CD4-positive, alpha-beta T cell (primary cell): ENCODE measurements at regions of chr16 and their contacts with region 1.

Region 1: GRCh38 chr16:47141773-47142485 is 1.8 kb downstream of the NETO2 start:
- DNase-seq: peak; percentile 63 to 91 (median 77)
- ATAC-seq: peak; percentile 82
- H3K4me3 ChIP-seq: peak overlapping the region; percentile 56
- H3K4me3 Mint-ChIP-seq: peak overlapping the region; percentile 87
- H3K27ac ChIP-seq: no peak overlapping the region
- H3K27ac Mint-ChIP-seq: peak overlapping the region; percentile 45
- H3K4me1 ChIP-seq: peaks cover 17% of the 10 kb centered on the region
- H3K4me1 Mint-ChIP-seq: peaks cover 17% of the 10 kb centered on the region
- H3K27me3 ChIP-seq: peaks cover 0 to 8% of the 10 kb centered on the region in 2 experiments
- H3K27me3 Mint-ChIP-seq: peaks cover 21% of the 10 kb centered on the region
- CTCF ChIP-seq: peak; percentile 83

Region 2: GRCh38 chr16:46689365-46690280 is 452.3 kb before region 1 on chr16 and contains the start of gene ORC6:
- CTCF ChIA-PET with region 1: no interaction called
- POLR2A ChIA-PET with region 1: no interaction called
- intact Hi-C with region 1: loop called in 1 of 2 experiments (anchors 10 kb)
- DNase-seq: peak; percentile 92 to 97 (median 96)
- ATAC-seq: peak; percentile 72
- H3K4me3 ChIP-seq: peak within 1 kb of the TSS; percentile 94
- H3K4me3 Mint-ChIP-seq: no peak within 1 kb of the TSS
- H3K27ac ChIP-seq: peak within 1 kb of the TSS; percentile 91 to 98
- H3K27ac Mint-ChIP-seq: no peak within 1 kb of the TSS
- H3K4me1 ChIP-seq: peaks cover 23% of the 10 kb centered on the region
- H3K4me1 Mint-ChIP-seq: peaks cover 33% of the 10 kb centered on the region
- H3K27me3 ChIP-seq: no peaks in the 10 kb centered on the region
- H3K27me3 Mint-ChIP-seq: no peaks in the 10 kb centered on the region
- CTCF ChIP-seq: no peak
- total RNA-seq, gene ORC6: 3.7 to 3.8 TPM

Region 3: GRCh38 chr16:46947900-46948547 is 193.9 kb before region 1 on chr16:
- CTCF ChIA-PET with region 1: interaction called, 4 read pairs
- POLR2A ChIA-PET with region 1: no interaction called
- intact Hi-C with region 1: loop called in 1 of 2 experiments (anchors 10 kb)
- DNase-seq: peak in 8 of 14 experiments; percentile 4 to 70 (median 31)
- ATAC-seq: peak; percentile 76
- H3K4me3 ChIP-seq: no peak overlapping the region
- H3K4me3 Mint-ChIP-seq: no peak overlapping the region
- H3K27ac ChIP-seq: no peak overlapping the region
- H3K27ac Mint-ChIP-seq: no peak overlapping the region
- H3K4me1 ChIP-seq: peaks cover 12% of the 10 kb centered on the region
- H3K4me1 Mint-ChIP-seq: peaks cover 9% of the 10 kb centered on the region
- H3K27me3 ChIP-seq: no peaks in the 10 kb centered on the region
- H3K27me3 Mint-ChIP-seq: no peaks in the 10 kb centered on the region
- CTCF ChIP-seq: peak; percentile 67

Region 4: DNA sequence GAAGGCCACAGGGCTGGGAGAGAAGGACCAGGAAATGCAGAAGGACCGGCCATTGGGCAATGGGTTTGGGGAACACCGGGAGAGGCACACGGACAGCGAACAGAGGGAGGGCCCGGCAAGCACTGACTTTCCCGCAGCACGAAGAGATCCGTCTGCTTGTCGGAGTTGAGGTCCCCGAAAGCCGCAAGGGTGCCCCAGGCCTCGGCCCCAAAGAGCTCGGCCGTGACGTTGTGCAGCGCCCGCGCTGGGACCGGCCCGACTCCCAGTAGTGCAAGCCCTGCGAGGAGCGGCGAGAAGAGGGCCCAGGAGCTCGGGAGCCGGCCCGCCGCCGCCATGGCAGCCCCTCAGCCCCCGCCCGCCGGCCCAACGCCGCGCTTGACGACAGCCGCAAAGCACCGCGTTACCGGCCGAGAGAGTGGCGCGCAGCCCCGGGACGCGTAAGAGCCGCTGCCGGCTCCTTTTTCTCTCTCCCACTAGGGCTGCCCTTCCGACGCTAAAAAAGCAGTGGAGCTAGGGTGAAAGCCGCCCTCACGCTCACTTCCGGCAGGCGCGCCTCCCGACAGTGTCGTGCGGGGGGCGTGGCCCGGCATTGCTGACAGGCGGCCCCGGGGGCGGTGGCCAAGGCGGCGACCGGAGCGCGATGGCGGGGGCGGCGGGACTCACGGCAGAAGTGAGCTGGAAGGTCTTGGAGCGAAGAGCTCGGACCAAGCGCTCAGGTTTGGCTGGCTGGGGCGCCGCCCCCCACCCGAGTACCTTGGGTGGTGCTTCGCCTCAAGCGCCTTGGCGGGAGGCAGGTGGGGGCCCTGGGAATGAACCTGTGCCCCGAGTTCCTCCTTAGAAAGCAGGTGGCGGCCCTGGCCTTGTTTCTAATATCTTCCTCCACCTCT is 319.0 kb after region 1 on chr16 and contains the starts of genes ITFG1 and PHKB:
- CTCF ChIA-PET with region 1: interaction called, 4 read pairs
- POLR2A ChIA-PET with region 1: interaction called, 12 read pairs
- intact Hi-C with region 1: loop called in 1 of 2 experiments (anchors 5 kb)
- DNase-seq: peak; percentile 89 to 98 (median 94)
- ATAC-seq: peak; percentile 96
- H3K4me3 ChIP-seq: peak within 1 kb of the TSS; percentile 79
- H3K4me3 Mint-ChIP-seq: peak within 1 kb of the TSS; percentile 89
- H3K27ac ChIP-seq: peak within 1 kb of the TSS; percentile 87 to 93
- H3K27ac Mint-ChIP-seq: peak within 1 kb of the TSS; percentile 87
- H3K4me1 ChIP-seq: peaks cover 26% of the 10 kb centered on the region
- H3K4me1 Mint-ChIP-seq: peaks cover 70% of the 10 kb centered on the region
- H3K27me3 ChIP-seq: no peaks in the 10 kb centered on the region
- H3K27me3 Mint-ChIP-seq: no peaks in the 10 kb centered on the region
- CTCF ChIP-seq: no peak
- total RNA-seq, gene ITFG1: 18.0 to 18.5 TPM
- total RNA-seq, gene PHKB: 28.8 to 31.3 TPM

Region 5: GRCh38 chr16:48156790-48157209 is 1014.9 kb after region 1 on chr16:
- CTCF ChIA-PET with region 1: no interaction called
- POLR2A ChIA-PET with region 1: no interaction called
- intact Hi-C with region 1: loop called (anchors 1 kb)
- DNase-seq: peak; percentile 62 to 86 (median 76)
- ATAC-seq: peak; percentile 74
- H3K4me3 ChIP-seq: no peak overlapping the region
- H3K4me3 Mint-ChIP-seq: no peak overlapping the region
- H3K27ac ChIP-seq: no peak overlapping the region
- H3K27ac Mint-ChIP-seq: no peak overlapping the region
- H3K4me1 ChIP-seq: peaks cover 7% of the 10 kb centered on the region
- H3K4me1 Mint-ChIP-seq: no peaks in the 10 kb centered on the region
- H3K27me3 ChIP-seq: peaks cover 0 to 3% of the 10 kb centered on the region in 2 experiments
- H3K27me3 Mint-ChIP-seq: peaks cover 14% of the 10 kb centered on the region
- CTCF ChIP-seq: peak; percentile 94

Region 6: DNA sequence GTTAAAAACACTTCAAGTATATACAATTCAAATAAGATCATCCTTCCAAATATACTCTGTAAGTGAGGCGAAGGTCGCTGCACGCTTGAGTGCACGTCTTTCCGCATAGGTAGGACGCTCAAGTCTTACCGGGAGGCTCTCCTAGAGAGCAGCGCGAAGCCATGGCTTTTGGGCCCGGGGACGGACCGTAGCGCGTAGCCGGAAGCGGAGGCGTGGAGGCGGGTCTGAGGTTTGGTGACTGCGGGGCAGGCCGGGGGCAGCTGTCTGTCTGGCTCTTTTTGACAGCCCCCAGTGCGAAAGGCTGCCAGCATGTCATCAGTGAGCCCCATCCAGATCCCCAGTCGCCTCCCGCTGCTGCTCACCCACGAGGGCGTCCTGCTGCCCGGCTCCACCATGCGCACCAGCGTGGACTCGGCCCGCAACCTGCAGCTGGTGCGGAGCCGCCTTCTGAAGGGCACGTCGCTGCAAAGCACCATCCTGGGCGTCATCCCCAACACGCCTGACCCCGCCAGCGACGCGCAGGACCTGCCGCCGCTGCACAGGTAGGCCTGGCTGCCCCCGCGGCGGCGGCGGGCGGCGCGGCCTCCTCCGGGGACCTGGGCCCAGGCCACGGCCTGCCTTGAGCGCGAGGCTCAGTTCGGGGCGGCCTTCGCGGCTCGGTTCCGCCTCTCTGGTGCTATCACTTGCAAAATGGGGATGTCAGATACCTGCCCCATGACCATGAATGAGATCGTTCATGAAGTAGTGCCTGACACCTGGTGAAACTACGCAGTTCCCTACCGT is 1102.3 kb after region 1 on chr16 and contains the start of gene LONP2:
- CTCF ChIA-PET with region 1: interaction called, 3 read pairs
- POLR2A ChIA-PET with region 1: no interaction called
- intact Hi-C with region 1: loop called in 1 of 2 experiments (anchors 5 kb)
- DNase-seq: peak; percentile 81 to 94 (median 87)
- ATAC-seq: peak; percentile 95
- H3K4me3 ChIP-seq: peak within 1 kb of the TSS; percentile 86
- H3K4me3 Mint-ChIP-seq: peak within 1 kb of the TSS; percentile 90
- H3K27ac ChIP-seq: peak within 1 kb of the TSS; percentile 78
- H3K27ac Mint-ChIP-seq: peak within 1 kb of the TSS; percentile 89
- H3K4me1 ChIP-seq: peaks cover 43% of the 10 kb centered on the region
- H3K4me1 Mint-ChIP-seq: peaks cover 49% of the 10 kb centered on the region
- H3K27me3 ChIP-seq: no peaks in the 10 kb centered on the region
- H3K27me3 Mint-ChIP-seq: no peaks in the 10 kb centered on the region
- CTCF ChIP-seq: no peak
- total RNA-seq, gene LONP2: 77.2 to 81.0 TPM

Region 7: DNA sequence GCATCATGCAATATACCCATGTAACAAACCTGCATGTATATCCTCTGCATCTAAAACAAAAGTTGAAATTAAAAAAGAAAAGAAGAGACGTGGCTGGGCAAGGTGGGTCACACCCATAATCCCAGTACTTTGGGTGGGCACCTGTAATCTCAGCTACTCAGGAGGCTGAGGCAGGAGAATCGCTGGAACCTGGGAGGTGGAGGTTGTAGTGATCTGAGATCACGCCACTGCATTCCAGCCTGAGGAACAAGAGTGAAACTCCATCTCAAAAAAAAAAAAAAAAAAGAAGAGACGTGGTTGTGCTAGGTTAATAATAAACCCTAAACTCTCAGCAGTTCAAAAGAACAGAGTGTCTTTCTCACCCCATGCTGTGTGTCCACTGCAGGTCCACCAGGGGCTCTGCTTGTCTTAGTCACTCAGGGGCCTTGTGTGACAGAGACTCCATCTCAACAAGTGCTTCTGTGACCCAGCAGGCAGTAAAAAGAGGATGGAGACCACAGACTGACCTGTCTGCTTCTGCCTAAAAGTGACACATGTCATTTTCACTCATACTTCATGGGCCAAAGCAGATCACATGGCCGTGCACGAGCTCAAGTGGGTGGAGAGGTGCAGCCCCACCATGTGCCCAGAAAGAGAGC is 1490.3 kb after region 1 on chr16:
- CTCF ChIA-PET with region 1: interaction called, 4 read pairs
- POLR2A ChIA-PET with region 1: no interaction called
- intact Hi-C with region 1: loop called (anchors 5 to 10 kb)
- DNase-seq: no peak
- ATAC-seq: no peak
- H3K4me3 ChIP-seq: no peak overlapping the region
- H3K4me3 Mint-ChIP-seq: no peak overlapping the region
- H3K27ac ChIP-seq: no peak overlapping the region
- H3K27ac Mint-ChIP-seq: no peak overlapping the region
- H3K4me1 ChIP-seq: peaks cover 9% of the 10 kb centered on the region
- H3K4me1 Mint-ChIP-seq: peaks cover 8% of the 10 kb centered on the region
- H3K27me3 ChIP-seq: no peaks in the 10 kb centered on the region
- H3K27me3 Mint-ChIP-seq: peaks cover 3% of the 10 kb centered on the region
- CTCF ChIP-seq: no peak